Endothelial cell of umbilical vein (primary cell): ENCODE measurements at regions of chr1 and their contacts with region 1.

Region 1: DNA sequence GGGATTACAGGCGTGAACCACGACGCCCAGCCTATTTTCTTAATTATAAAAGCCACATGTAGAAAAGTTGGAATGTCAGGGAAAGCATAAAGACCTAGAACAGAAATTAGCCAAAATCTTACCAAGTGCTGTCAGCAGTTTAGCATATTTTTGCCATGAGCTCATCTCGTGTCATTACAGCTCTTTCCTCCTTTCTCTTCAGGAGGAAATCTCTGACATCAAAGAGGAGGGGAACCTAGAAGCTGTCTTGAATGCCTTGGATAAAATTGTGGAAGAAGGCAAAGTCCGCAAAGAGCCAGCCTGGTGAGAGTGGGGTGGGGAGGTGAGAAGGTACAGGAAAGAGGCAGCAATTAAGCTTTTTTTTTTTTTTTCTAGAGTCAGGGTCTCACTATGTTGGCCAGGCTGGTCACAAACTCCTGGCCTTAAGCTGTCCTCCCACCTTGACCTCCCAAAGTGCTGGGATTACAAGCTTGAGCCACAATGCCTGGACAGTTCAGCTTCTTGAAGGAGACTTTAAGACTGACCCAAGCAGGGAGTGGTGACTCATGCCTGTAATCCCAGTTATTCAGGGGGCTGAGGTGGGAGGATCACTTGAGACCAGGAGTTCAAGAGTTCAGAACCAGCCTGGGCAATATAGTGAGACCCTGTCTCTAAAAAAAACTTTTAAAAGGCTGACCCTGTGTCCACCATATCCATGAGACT is 8.4 kb upstream of the BGLAP start:
- DNase-seq: no peak
- H3K4me3 ChIP-seq: no peak overlapping the region
- H3K27ac ChIP-seq: peak overlapping the region; percentile 60
- H3K4me1 ChIP-seq: peaks cover 12% of the 10 kb centered on the region
- H3K27me3 ChIP-seq: no peaks in the 10 kb centered on the region
- CTCF ChIP-seq: no peak
- POLR2A ChIP-seq: no peak

Region 2: DNA sequence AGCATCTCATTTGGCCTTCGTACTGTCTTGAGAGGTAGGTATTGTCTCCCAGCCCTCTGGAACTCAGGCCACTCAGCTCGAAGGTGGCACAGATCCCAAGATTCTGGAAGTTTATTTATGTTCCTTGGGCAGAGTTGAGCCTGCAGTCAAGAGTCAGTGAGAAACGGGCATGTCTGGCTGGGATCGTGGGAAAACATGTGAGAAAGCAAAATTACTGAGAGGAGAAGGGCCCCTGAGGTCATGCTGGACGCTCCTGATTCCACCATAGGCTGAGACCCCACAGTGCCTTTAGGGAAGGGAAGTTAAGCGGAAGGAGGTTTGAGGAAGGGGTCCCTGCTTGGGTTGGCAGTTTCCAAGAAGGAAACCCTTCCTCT is 92.7 kb before region 1 on chr1:
- CTCF ChIA-PET with region 1: interaction called, 489 read pairs
- POLR2A ChIA-PET with region 1: no interaction called
- dilution Hi-C with region 1: loop called (anchors 10 kb)
- intact Hi-C with region 1: no loop called
- DNase-seq: no peak
- H3K4me3 ChIP-seq: no peak overlapping the region
- H3K27ac ChIP-seq: no peak overlapping the region
- H3K4me1 ChIP-seq: no peaks in the 10 kb centered on the region
- H3K27me3 ChIP-seq: no peaks in the 10 kb centered on the region
- CTCF ChIP-seq: no peak
- POLR2A ChIP-seq: no peak

Region 3: GRCh38 chr1:156245451-156246232 is 12.1 kb after region 1 on chr1:
- CTCF ChIA-PET with region 1: interaction called, 12 read pairs
- POLR2A ChIA-PET with region 1: interaction called, 4 read pairs
- dilution Hi-C with region 1: no loop called
- intact Hi-C with region 1: no loop called
- DNase-seq: peak; percentile 31
- H3K4me3 ChIP-seq: peak overlapping the region in 1 of 3 experiments; percentile 29
- H3K27ac ChIP-seq: no peak overlapping the region
- H3K4me1 ChIP-seq: peaks cover 6% of the 10 kb centered on the region
- H3K27me3 ChIP-seq: peaks cover 0 to 4% of the 10 kb centered on the region in 2 experiments
- CTCF ChIP-seq: no peak
- POLR2A ChIP-seq: no peak

Region 4: DNA sequence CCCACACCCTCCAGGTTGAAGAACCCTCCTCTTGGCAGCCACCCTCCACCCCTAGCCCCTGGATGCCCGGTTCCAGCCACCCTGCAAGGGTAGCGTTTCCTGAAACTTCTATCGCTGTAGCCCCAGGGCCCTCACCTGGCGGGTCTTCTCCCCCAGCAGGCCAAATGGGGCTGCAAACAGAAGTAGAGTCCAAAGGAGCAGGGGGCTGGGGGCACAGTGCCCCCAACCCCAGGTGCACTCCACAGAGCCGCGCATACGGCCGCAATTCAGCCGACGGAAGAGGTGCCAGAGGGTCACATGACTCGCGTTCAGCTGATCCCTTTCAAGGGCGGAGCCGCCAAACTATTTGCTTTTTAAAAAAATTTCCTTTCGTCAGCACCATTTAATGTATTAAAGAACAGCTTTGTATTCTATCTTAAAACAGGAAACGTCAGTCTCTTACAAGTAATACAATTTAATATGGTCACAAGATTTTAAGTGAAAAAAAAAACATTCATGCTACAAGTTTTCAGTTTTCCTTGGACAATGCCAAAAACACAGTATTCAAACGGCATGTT is 61.9 kb after region 1 on chr1 and contains the start of gene GLMP:
- CTCF ChIA-PET with region 1: no interaction called
- POLR2A ChIA-PET with region 1: no interaction called
- dilution Hi-C with region 1: no loop called
- intact Hi-C with region 1: no loop called
- DNase-seq: peak; percentile 66
- H3K4me3 ChIP-seq: peak within 1 kb of the TSS; percentile 41 to 82 (median 66)
- H3K27ac ChIP-seq: peak within 1 kb of the TSS; percentile 3
- H3K4me1 ChIP-seq: peaks cover 10% of the 10 kb centered on the region
- H3K27me3 ChIP-seq: no peaks in the 10 kb centered on the region
- CTCF ChIP-seq: no peak
- POLR2A ChIP-seq: peak; percentile 79
- total RNA-seq, gene GLMP: 83.3 and 84.3 TPM in 2 replicates